CD4-positive, alpha-beta memory T cell (primary cell): ENCODE measurements at regions of chr11 and their contacts with region 1.

Region 1: DNA sequence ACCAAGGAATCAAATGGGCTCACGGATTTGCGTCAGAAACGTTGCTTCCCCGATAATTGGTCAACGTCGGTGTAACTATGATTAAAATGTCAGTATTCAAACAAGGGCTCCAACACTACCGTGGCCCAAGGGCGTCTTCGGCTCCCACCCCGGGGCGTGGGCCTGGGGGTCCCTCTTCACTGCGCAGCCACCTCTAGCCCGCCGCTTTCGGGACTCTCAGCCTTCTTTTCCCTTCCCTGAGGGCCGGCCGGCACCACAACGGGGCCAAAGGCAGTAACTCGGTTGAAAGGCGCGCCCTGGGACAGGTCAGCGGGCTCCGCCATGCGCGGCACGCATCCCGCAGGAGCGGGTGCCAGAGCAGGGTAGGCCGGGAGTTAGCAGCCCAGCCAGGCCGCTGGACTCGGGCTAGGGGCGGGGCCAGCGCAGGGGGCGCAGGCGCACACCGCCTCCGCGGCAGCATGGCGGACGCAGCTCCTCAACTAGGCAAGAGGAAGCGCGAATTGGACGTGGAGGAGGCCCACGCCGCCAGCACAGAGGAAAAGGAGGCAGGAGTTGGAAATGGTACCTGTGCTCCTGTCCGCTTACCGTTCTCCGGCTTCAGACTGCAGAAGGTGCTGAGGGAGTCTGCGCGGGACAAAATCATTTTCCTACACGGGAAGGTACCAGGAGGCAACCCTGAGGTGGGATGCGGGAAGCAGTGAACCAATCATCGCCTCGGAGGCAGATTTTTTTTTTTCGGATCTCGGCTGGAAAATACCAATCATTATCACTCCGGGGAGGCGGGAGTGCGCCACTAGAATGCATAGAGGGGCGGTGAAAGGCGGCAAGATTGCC is at the start of gene DCPS:
- DNase-seq: peak; percentile 84 to 89 (median 86)
- H3K4me3 ChIP-seq: peak within 1 kb of the TSS; percentile 66 to 90
- H3K4me3 Mint-ChIP-seq: peak within 1 kb of the TSS; percentile 86 to 99 (median 92)
- H3K27ac ChIP-seq: peak within 1 kb of the TSS; percentile 91
- H3K27ac Mint-ChIP-seq: peak within 1 kb of the TSS; percentile 85 to 99 (median 94)
- H3K4me1 ChIP-seq: peaks cover 26% of the 10 kb centered on the region
- H3K4me1 Mint-ChIP-seq: peaks cover 21 to 47% (median 34%) of the 10 kb centered on the region in 4 donors
- H3K27me3 ChIP-seq: no peaks in the 10 kb centered on the region
- H3K27me3 Mint-ChIP-seq: no peaks in the 10 kb centered on the region
- total RNA-seq, gene DCPS: 20.2 to 21.2 TPM

Region 2: GRCh38 chr11:126062679-126063506 is 240.9 kb before region 1 on chr11 and contains the start of gene CDON:
- CTCF ChIA-PET with region 1: no interaction called
- POLR2A ChIA-PET with region 1: interaction called, 3 read pairs
- intact Hi-C with region 1: loop called (anchors 1 kb)
- DNase-seq: peak; percentile 88 to 95 (median 93)
- H3K4me3 ChIP-seq: peak within 1 kb of the TSS; percentile 47 to 76
- H3K4me3 Mint-ChIP-seq: peak within 1 kb of the TSS; percentile 86 to 96 (median 90)
- H3K27ac ChIP-seq: peak within 1 kb of the TSS; percentile 73
- H3K27ac Mint-ChIP-seq: peak within 1 kb of the TSS; percentile 84 to 99 (median 96)
- H3K4me1 ChIP-seq: peaks cover 14% of the 10 kb centered on the region
- H3K4me1 Mint-ChIP-seq: peaks cover 5 to 14% (median 9%) of the 10 kb centered on the region in 4 donors
- H3K27me3 ChIP-seq: no peaks in the 10 kb centered on the region
- H3K27me3 Mint-ChIP-seq: peaks cover 0 to 2% of the 10 kb centered on the region in 2 donors
- total RNA-seq, gene CDON: 2.7 to 3.1 TPM

Region 3: DNA sequence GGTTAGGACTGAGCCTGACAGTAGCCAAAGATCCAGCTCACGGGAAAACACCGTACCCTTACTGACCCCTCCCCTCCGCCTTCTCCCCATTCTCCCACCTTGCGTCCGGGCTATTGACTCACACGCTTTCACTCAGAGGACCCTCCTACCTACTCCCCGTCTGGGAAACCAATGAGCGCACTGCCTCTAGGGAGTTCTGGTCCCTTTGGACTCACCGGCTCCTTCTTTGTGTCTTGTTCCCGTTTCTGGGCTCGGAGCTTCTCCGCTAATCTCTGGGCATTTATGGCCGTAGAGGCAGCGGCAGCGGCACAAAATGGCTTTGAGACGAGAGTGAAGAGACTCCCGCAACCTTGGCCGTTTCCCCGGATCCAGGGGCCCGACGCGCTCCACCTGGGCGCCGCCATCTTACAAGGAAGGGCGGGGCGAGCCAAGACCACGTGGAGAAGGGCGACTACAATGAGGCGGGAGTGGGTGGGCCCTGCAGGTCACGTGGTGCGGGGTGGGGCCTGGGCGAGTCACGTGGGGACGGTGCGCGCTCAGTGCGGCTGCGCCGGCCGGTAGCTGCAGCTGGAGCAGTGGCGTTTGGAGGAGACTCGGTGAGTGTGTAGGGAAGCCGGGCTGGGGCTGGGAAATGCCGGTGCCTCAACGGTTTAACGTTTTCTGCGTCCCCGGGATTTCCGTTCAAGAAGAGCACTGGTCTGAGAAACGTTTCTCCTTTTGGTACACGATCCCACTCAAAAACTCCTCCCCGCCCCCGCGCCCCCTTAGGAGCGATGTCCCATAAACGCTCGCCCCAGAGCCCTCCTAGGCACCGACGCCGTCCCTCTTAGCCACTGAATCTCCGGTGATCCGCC is 92.4 kb before region 1 on chr11 and contains the starts of genes FAM118B and RPUSD4:
- CTCF ChIA-PET with region 1: no interaction called
- POLR2A ChIA-PET with region 1: interaction called, 3 read pairs
- intact Hi-C with region 1: loop called (anchors 5 kb)
- DNase-seq: peak; percentile 98
- H3K4me3 ChIP-seq: peak within 1 kb of the TSS; percentile 44 to 91
- H3K4me3 Mint-ChIP-seq: peak within 1 kb of the TSS; percentile 99 to 100 (median 99)
- H3K27ac ChIP-seq: peak within 1 kb of the TSS; percentile 67
- H3K27ac Mint-ChIP-seq: peak within 1 kb of the TSS; percentile 91 to 99 (median 98)
- H3K4me1 ChIP-seq: peaks cover 24% of the 10 kb centered on the region
- H3K4me1 Mint-ChIP-seq: peaks cover 27 to 43% (median 32%) of the 10 kb centered on the region in 4 donors
- H3K27me3 ChIP-seq: no peaks in the 10 kb centered on the region
- H3K27me3 Mint-ChIP-seq: no peaks in the 10 kb centered on the region
- total RNA-seq, gene FAM118B: 12.6 to 13.2 TPM
- total RNA-seq, gene RPUSD4: 39.3 to 41.2 TPM

Region 4: GRCh38 chr11:126268708-126269579 is 34.9 kb before region 1 on chr11 and contains the starts of genes FOXRED1 and SRPRA:
- CTCF ChIA-PET with region 1: no interaction called
- POLR2A ChIA-PET with region 1: interaction called, 39 read pairs
- intact Hi-C with region 1: loop called (anchors 1 kb)
- DNase-seq: peak; percentile 100
- H3K4me3 ChIP-seq: peak within 1 kb of the TSS; percentile 84 to 96
- H3K4me3 Mint-ChIP-seq: peak within 1 kb of the TSS; percentile 95 to 99 (median 96)
- H3K27ac ChIP-seq: peak within 1 kb of the TSS; percentile 83
- H3K27ac Mint-ChIP-seq: peak within 1 kb of the TSS; percentile 94 to 99 (median 99)
- H3K4me1 ChIP-seq: peaks cover 26% of the 10 kb centered on the region
- H3K4me1 Mint-ChIP-seq: peaks cover 19 to 43% (median 24%) of the 10 kb centered on the region in 4 donors
- H3K27me3 ChIP-seq: no peaks in the 10 kb centered on the region
- H3K27me3 Mint-ChIP-seq: no peaks in the 10 kb centered on the region
- total RNA-seq, gene FOXRED1: 30.5 to 32.5 TPM
- total RNA-seq, gene SRPRA: 171 to 176 TPM

Region 5: GRCh38 chr11:126293726-126294125 is 10.1 kb before region 1 on chr11:
- CTCF ChIA-PET with region 1: interaction called, 11 read pairs
- POLR2A ChIA-PET with region 1: interaction called, 4 read pairs
- intact Hi-C with region 1: no loop called
- DNase-seq: no peak
- H3K4me3 ChIP-seq: no peak overlapping the region
- H3K4me3 Mint-ChIP-seq: no peak overlapping the region
- H3K27ac ChIP-seq: no peak overlapping the region
- H3K27ac Mint-ChIP-seq: peak overlapping the region in 4 of 7 donors; percentile 25 to 85 (median 52)
- H3K4me1 ChIP-seq: no peaks in the 10 kb centered on the region
- H3K4me1 Mint-ChIP-seq: peaks cover 5 to 15% (median 9%) of the 10 kb centered on the region in 4 donors
- H3K27me3 ChIP-seq: no peaks in the 10 kb centered on the region
- H3K27me3 Mint-ChIP-seq: no peaks in the 10 kb centered on the region

Region 6: DNA sequence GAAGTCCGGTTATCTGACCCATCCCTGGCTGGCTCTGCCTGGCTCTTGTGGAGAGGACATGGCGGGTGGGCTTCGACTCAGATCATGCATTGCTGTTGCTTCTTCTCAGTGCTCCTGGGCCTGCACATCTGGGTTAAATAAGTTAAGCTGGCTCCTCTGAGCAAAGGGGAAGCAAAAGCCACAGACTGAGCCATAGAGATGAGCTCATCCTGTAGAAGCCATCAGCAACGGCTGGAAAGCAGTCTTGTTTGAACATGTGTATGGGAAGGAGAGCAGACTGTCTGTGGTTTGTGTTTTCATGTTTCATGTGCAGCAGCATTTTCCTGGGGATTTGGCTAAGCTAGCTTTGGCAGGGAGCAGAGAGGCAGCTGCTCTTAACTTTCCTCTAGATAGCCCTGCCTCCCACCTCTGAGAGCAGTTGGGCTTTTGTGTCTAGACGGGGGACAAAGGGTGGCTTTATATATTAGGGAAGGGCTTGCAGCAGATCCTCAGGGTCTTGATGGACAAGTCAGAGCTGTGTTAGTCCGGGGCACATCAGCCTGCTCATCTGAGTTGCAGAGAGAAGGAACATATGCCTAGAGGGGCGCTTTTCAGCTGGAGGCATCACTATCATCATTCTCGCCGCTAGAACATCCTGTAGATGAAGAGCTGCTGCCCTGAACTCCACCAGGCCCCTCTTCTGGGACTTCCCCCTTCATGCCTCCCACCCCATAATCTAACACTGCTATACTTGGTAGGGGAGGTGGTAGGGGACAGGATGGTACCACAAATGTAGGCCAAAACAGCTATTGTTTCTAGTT is 14.9 kb after region 1 on chr11:
- CTCF ChIA-PET with region 1: interaction called, 13 read pairs
- POLR2A ChIA-PET with region 1: interaction called, 18 read pairs
- intact Hi-C with region 1: no loop called
- DNase-seq: peak in 1 of 5 donors; percentile 14
- H3K4me3 ChIP-seq: no peak overlapping the region
- H3K4me3 Mint-ChIP-seq: peak overlapping the region in 7 of 8 donors; percentile 17 to 83 (median 70)
- H3K27ac ChIP-seq: peak overlapping the region; percentile 30
- H3K27ac Mint-ChIP-seq: peak overlapping the region; percentile 11 to 90 (median 65)
- H3K4me1 ChIP-seq: peaks cover 26% of the 10 kb centered on the region
- H3K4me1 Mint-ChIP-seq: peaks cover 27 to 46% (median 38%) of the 10 kb centered on the region in 4 donors
- H3K27me3 ChIP-seq: no peaks in the 10 kb centered on the region
- H3K27me3 Mint-ChIP-seq: no peaks in the 10 kb centered on the region